A673 (cell line): ENCODE measurements at regions of chr11 and their contacts with region 1.

Region 1: DNA sequence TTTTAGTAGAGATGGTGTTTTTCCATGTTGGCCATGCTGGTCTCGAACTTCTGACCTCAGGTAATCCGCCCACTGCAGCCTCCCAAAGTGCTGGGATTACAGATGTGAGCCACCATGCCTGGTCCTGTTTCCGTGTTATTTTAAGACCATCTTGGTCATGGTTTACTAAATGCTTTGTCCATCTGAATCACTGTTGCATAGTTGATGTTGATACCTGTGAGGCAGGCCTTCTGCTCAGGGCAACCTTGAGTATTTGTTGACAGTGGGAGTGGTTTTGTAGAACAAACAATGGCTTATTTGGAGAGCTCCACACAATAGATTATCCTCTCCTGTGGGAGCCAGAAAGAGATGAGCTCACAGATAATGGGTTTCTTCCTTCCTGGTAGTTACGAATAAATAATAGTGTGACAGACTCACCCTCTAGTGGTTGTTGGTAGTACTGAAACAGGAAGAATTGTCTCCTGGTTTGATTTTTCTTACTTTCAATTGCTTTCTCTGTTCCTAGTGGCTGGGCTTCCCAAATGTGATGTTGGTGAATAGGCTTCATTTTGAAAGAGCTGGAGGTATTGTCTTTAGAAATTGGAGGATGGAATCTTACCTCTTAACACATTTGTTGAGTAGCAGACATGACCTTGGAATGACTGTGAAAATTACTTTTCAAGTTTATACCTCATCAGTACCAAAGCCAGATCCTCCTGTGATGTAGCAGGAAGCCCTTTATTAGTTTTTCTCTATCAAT is 39.0 kb downstream of the CTNND1 start:
- DNase-seq: peak; percentile 92
- H3K4me3 ChIP-seq: no peak overlapping the region
- H3K27ac ChIP-seq: peak overlapping the region; percentile 41
- H3K4me1 ChIP-seq: peaks cover 17% of the 10 kb centered on the region
- H3K27me3 ChIP-seq: no peaks in the 10 kb centered on the region
- CTCF ChIP-seq: peak; percentile 92

Region 2: GRCh38 chr11:57456960-57457642 is 343.5 kb before region 1 on chr11:
- CTCF ChIA-PET with region 1: interaction called, 3 read pairs
- POLR2A ChIA-PET with region 1: no interaction called
- intact Hi-C with region 1: loop called (anchors 5 kb)
- DNase-seq: peak; percentile 86
- H3K4me3 ChIP-seq: no peak overlapping the region
- H3K27ac ChIP-seq: no peak overlapping the region
- H3K4me1 ChIP-seq: peaks cover 27% of the 10 kb centered on the region
- H3K27me3 ChIP-seq: peaks cover 30% of the 10 kb centered on the region
- CTCF ChIP-seq: peak; percentile 99

Region 3: GRCh38 chr11:57751676-57752253 is 48.8 kb before region 1 on chr11 and contains the start of gene BTBD18:
- CTCF ChIA-PET with region 1: interaction called, 89 read pairs
- POLR2A ChIA-PET with region 1: interaction called, 3 read pairs
- intact Hi-C with region 1: loop called (anchors 1 kb)
- DNase-seq: peak; percentile 76
- H3K4me3 ChIP-seq: no peak within 1 kb of the TSS
- H3K27ac ChIP-seq: no peak within 1 kb of the TSS
- H3K4me1 ChIP-seq: no peaks in the 10 kb centered on the region
- H3K27me3 ChIP-seq: no peaks in the 10 kb centered on the region
- CTCF ChIP-seq: peak; percentile 75
- total RNA-seq, gene BTBD18: not detected in 2 replicates

Region 4: GRCh38 chr11:57778318-57779037 is 22.1 kb before region 1 on chr11:
- CTCF ChIA-PET with region 1: interaction called, 27 read pairs
- POLR2A ChIA-PET with region 1: no interaction called
- intact Hi-C with region 1: no loop called
- DNase-seq: peak; percentile 100
- H3K4me3 ChIP-seq: peak overlapping the region; percentile 14
- H3K27ac ChIP-seq: peak overlapping the region; percentile 91
- H3K4me1 ChIP-seq: peaks cover 61% of the 10 kb centered on the region
- H3K27me3 ChIP-seq: no peaks in the 10 kb centered on the region
- CTCF ChIP-seq: no peak

Region 5: DNA sequence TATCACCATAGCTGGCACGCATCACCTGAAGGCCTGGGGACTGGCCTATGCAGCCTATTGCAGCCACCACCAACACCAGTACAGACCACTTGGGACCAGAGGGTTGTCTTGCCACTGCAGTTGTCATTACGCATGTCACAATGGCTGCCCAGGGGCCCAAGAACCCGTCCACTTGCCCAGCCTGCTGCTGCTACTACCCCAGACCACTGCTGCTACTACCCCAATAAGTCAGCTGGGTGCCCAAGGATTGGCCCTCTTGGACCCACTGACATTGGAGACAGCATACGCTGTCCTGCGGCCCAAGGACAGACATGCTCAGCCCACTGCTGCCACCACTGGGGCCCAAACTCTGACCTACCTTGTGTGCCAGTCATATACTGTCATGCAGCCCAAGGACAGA is 120.4 kb after region 1 on chr11:
- CTCF ChIA-PET with region 1: no interaction called
- POLR2A ChIA-PET with region 1: no interaction called
- intact Hi-C with region 1: no loop called
- DNase-seq: no peak
- H3K4me3 ChIP-seq: no peak overlapping the region
- H3K27ac ChIP-seq: no peak overlapping the region
- H3K4me1 ChIP-seq: no peaks in the 10 kb centered on the region
- H3K27me3 ChIP-seq: no peaks in the 10 kb centered on the region
- CTCF ChIP-seq: no peak